Activated B cell treated with CpG ODN at 0.5 μM for 24 hours (primary cell): ENCODE measurements at regions of chr17 and their contacts with region 1.

Region 1: GRCh38 chr17:81871387-81872230 is 472 bp upstream of the ARHGDIA start:
- DNase-seq: peak; percentile 96
- ATAC-seq: peak; percentile 18
- H3K4me3 Mint-ChIP-seq: peak overlapping the region; percentile 87
- H3K27ac Mint-ChIP-seq: peak overlapping the region; percentile 93
- H3K4me1 Mint-ChIP-seq: peaks cover 39% of the 10 kb centered on the region
- H3K27me3 Mint-ChIP-seq: no peaks in the 10 kb centered on the region
- CTCF ChIP-seq: no peak

Region 2: GRCh38 chr17:81460856-81461460 is 410.7 kb before region 1 on chr17:
- CTCF ChIA-PET with region 1: no interaction called
- POLR2A ChIA-PET with region 1: no interaction called
- intact Hi-C with region 1: no loop called
- DNase-seq: no peak
- ATAC-seq: no peak
- H3K4me3 Mint-ChIP-seq: no peak overlapping the region
- H3K27ac Mint-ChIP-seq: no peak overlapping the region
- H3K4me1 Mint-ChIP-seq: no peaks in the 10 kb centered on the region
- H3K27me3 Mint-ChIP-seq: no peaks in the 10 kb centered on the region
- CTCF ChIP-seq: no peak

Region 3: GRCh38 chr17:81833160-81833920 is 38.3 kb before region 1 on chr17 and contains the start of gene MCRIP1:
- CTCF ChIA-PET with region 1: interaction called, 3 read pairs
- POLR2A ChIA-PET with region 1: interaction called, 18 read pairs
- intact Hi-C with region 1: no loop called
- DNase-seq: peak; percentile 97
- ATAC-seq: peak; percentile 81
- H3K4me3 Mint-ChIP-seq: peak within 1 kb of the TSS; percentile 92
- H3K27ac Mint-ChIP-seq: peak within 1 kb of the TSS; percentile 91
- H3K4me1 Mint-ChIP-seq: peaks cover 22% of the 10 kb centered on the region
- H3K27me3 Mint-ChIP-seq: no peaks in the 10 kb centered on the region
- CTCF ChIP-seq: no peak
- total RNA-seq, gene MCRIP1: 75.0 and 90.4 TPM in 2 replicates

Region 4: DNA sequence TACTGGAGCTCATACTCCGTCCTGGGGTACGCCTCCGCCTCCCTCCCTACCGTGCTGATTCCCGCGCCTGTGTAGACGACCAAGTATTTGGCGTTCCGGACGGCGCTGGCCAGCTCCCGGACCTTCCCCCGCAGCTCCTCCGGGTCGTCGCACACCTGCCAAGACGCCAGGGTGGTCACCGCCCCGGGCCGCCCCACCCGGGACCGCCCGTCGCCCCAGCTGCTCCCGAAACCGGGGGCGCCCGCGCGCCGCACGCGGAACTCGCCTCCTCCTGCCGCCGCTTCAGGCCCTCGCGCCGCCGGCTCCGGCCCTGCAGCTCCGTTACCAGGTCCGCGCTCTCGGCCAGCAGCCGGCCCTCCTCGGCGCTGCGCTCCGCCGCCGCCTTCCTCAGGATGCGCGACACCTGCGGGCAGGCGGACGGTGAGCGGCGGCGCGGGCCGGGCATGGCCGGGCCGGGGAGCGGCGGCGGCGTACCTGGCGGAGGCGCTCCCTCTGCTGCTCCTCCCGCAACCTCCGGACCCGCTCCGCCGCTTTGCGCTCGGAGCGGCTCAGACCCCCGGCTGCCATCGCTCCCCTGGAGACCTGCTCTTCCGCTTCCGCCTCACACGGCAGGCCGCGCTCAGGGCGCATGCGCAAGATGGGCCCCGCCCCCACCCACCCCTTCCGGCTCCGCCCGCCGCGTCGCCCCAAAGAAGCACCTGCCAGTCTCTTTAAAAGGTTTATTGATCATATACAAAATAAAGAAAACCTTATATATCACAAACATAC is 46.1 kb after region 1 on chr17 and contains the start of gene SIRT7:
- CTCF ChIA-PET with region 1: interaction called, 5 read pairs
- POLR2A ChIA-PET with region 1: interaction called, 6 read pairs
- intact Hi-C with region 1: loop called (anchors 2 kb)
- DNase-seq: peak; percentile 74
- ATAC-seq: peak; percentile 88
- H3K4me3 Mint-ChIP-seq: peak within 1 kb of the TSS; percentile 88
- H3K27ac Mint-ChIP-seq: peak within 1 kb of the TSS; percentile 76
- H3K4me1 Mint-ChIP-seq: peaks cover 25% of the 10 kb centered on the region
- H3K27me3 Mint-ChIP-seq: no peaks in the 10 kb centered on the region
- CTCF ChIP-seq: no peak
- total RNA-seq, gene SIRT7: 57.6 and 66.4 TPM in 2 replicates

Region 5: GRCh38 chr17:81959362-81960129 is 87.9 kb after region 1 on chr17:
- CTCF ChIA-PET with region 1: interaction called, 10 read pairs
- POLR2A ChIA-PET with region 1: no interaction called
- intact Hi-C with region 1: no loop called
- DNase-seq: peak; percentile 90
- ATAC-seq: peak; percentile 95
- H3K4me3 Mint-ChIP-seq: no peak overlapping the region
- H3K27ac Mint-ChIP-seq: no peak overlapping the region
- H3K4me1 Mint-ChIP-seq: peaks cover 4% of the 10 kb centered on the region
- H3K27me3 Mint-ChIP-seq: peaks cover 25% of the 10 kb centered on the region
- CTCF ChIP-seq: peak; percentile 20

Region 6: DNA sequence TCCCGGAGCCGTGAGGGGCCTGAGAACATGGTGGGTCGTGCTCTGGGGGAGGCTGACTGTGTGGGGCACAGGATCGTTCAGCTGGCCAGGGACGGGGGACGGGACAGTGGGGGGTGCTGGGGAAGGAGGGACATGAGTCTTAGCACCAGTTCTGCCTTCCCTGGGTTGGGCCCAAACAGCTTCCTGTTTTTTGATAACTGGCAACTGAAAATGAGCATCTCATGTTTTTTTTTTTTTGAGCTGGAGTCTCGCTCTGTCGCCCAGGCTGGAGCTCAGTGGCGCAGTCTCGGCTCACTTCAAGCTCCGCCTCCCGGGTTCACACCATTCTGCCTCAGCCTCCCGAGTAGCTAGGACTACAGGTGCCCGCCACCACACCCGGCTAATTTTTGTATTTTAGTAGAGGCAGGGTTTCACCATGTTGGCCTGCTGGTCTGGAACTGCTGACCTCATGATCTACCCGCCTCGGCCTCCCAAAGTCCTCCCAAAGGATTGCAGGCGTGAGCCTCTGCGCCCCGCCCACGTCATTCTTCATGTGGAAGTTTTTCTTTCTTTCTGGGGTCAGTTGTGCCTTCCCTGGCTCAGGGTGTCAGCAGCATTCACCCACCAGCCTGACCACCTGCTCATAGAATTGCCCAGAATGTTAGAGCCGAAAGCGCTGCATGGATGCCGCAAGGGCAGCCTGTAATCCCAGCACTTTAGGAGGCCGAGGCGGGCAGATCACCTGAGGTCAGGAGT is 112.2 kb after region 1 on chr17:
- CTCF ChIA-PET with region 1: no interaction called
- POLR2A ChIA-PET with region 1: no interaction called
- intact Hi-C with region 1: no loop called
- DNase-seq: no peak
- ATAC-seq: no peak
- H3K4me3 Mint-ChIP-seq: no peak overlapping the region
- H3K27ac Mint-ChIP-seq: no peak overlapping the region
- H3K4me1 Mint-ChIP-seq: peaks cover 23% of the 10 kb centered on the region
- H3K27me3 Mint-ChIP-seq: no peaks in the 10 kb centered on the region
- CTCF ChIP-seq: no peak

Region 7: GRCh38 chr17:82022981-82023374 is 151.4 kb after region 1 on chr17 and contains the start of gene LRRC45:
- CTCF ChIA-PET with region 1: no interaction called
- POLR2A ChIA-PET with region 1: no interaction called
- intact Hi-C with region 1: loop called (anchors 5 kb)
- DNase-seq: peak; percentile 97
- ATAC-seq: peak; percentile 96
- H3K4me3 Mint-ChIP-seq: peak within 1 kb of the TSS; percentile 85
- H3K27ac Mint-ChIP-seq: no peak within 1 kb of the TSS
- H3K4me1 Mint-ChIP-seq: peaks cover 22% of the 10 kb centered on the region
- H3K27me3 Mint-ChIP-seq: no peaks in the 10 kb centered on the region
- CTCF ChIP-seq: no peak
- total RNA-seq, gene LRRC45: 10.6 and 10.8 TPM in 2 replicates

Region 8: GRCh38 chr17:82065638-82066303 is 194.2 kb after region 1 on chr17 and contains the start of gene DUS1L:
- CTCF ChIA-PET with region 1: no interaction called
- POLR2A ChIA-PET with region 1: no interaction called
- intact Hi-C with region 1: no loop called
- DNase-seq: peak; percentile 79
- ATAC-seq: peak; percentile 89
- H3K4me3 Mint-ChIP-seq: peak within 1 kb of the TSS; percentile 84
- H3K27ac Mint-ChIP-seq: peak within 1 kb of the TSS; percentile 78
- H3K4me1 Mint-ChIP-seq: peaks cover 15% of the 10 kb centered on the region
- H3K27me3 Mint-ChIP-seq: no peaks in the 10 kb centered on the region
- CTCF ChIP-seq: no peak
- total RNA-seq, gene DUS1L: 127 and 134 TPM in 2 replicates